Mammary epithelial cell (primary cell): ENCODE measurements at regions of chr9 and their contacts with region 1.

Region 1: GRCh38 chr9:127763918-127764384 is 14.5 kb downstream of the SH2D3C start:
- DNase-seq: no peak
- H3K4me3 ChIP-seq: no peak overlapping the region
- H3K27ac ChIP-seq: no peak overlapping the region
- H3K4me1 ChIP-seq: no peaks in the 10 kb centered on the region
- H3K27me3 ChIP-seq: no peaks in the 10 kb centered on the region
- CTCF ChIP-seq: peak in 1 of 2 donors; percentile 23

Region 2: DNA sequence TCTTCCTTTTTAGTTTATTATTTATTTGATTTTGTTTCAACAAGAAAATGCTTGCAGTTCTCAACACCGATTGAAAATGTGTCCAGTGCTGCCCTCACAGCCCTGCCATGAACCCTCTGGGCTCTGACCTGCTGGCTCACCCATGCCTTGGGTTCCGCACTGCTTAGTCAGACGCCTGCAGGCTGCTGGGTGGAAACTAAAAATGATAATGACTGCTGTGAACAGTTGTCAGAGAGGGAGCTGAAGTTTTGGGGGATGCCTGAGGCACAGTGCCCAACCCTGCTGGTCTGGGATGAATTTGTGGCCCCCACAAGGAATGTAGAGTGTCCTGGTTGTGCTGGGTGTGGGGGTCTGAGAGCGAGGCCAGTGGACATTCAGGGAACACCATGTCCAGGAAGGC is 79.4 kb before region 1 on chr9:
- CTCF ChIA-PET with region 1: no interaction called
- dilution Hi-C with region 1: no loop called
- in situ Hi-C with region 1: no loop called
- intact Hi-C with region 1: no loop called
- DNase-seq: peak; percentile 24
- H3K4me3 ChIP-seq: no peak overlapping the region
- H3K27ac ChIP-seq: no peak overlapping the region
- H3K4me1 ChIP-seq: peaks cover 24% of the 10 kb centered on the region
- H3K27me3 ChIP-seq: no peaks in the 10 kb centered on the region
- CTCF ChIP-seq: no peak

Region 3: DNA sequence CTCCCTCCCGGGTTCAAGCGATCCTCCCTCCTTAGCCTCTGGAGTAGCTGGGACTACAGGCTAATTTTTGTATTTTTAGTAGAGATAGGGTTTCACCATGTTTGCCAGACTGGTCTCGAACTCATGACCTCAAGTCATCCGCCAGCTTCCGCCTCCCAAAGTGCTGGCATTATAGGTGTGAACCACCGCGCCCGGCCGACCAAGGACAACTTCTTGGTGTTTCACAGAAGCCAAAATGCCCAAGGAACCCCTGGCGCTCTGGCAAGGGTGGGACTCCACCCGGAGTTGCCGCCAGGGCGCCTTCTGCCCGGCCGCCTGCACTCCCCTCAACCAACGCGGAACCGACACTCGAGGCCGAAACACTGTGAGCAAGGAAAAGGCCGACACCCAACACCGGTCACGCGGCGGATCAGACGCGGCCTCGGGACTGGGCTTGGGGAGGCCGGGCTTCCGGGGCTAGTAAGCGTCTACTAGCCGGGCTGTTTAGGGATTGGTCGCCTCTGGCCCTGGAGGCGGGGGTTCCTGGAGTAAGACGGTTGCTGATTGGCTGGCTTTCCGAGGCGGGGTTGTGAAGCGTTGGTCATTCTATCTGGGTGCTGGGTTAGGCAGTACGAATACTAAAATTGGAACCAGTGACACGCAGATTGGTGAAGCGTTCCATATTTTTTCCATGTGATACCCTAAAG is 64.8 kb before region 1 on chr9:
- CTCF ChIA-PET with region 1: no interaction called
- dilution Hi-C with region 1: loop called (anchors 5 kb)
- in situ Hi-C with region 1: no loop called
- intact Hi-C with region 1: no loop called
- DNase-seq: peak; percentile 85
- H3K4me3 ChIP-seq: peak overlapping the region in 2 of 3 experiments; percentile 15 to 31
- H3K27ac ChIP-seq: no peak overlapping the region
- H3K4me1 ChIP-seq: peaks cover 3% of the 10 kb centered on the region
- H3K27me3 ChIP-seq: no peaks in the 10 kb centered on the region
- CTCF ChIP-seq: no peak

Region 4: GRCh38 chr9:127817881-127818434 is 54.0 kb after region 1 on chr9:
- CTCF ChIA-PET with region 1: no interaction called
- dilution Hi-C with region 1: loop called (anchors 5 kb)
- in situ Hi-C with region 1: no loop called
- intact Hi-C with region 1: no loop called
- DNase-seq: no peak
- H3K4me3 ChIP-seq: no peak overlapping the region
- H3K27ac ChIP-seq: no peak overlapping the region
- H3K4me1 ChIP-seq: no peaks in the 10 kb centered on the region
- H3K27me3 ChIP-seq: no peaks in the 10 kb centered on the region
- CTCF ChIP-seq: no peak